H1 (cell line): ENCODE measurements at regions of chr22 and their contacts with region 1.

Region 1: DNA sequence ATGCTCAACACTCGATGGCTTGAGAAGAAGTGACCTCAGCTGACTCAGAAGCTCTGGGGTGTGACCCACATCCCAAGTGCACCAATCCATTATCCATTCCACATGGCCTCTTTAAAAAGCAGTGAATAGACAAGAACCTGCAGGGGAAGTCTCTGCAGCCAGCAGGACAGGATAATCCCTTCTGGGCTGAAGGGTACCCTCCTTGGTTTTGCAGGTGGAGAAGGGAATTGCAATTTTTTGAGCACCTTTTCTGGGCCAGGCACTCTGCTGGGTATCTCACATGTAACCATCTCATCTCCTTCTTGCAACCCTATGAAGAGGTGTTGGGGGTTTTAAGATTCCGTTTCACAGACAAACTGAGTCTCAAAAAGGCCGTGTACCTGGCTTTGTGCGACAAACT is 76.6 kb downstream of the MYO18B start:
- DNase-seq: no peak
- H3K4me3 ChIP-seq: no peak overlapping the region
- H3K27ac ChIP-seq: no peak overlapping the region
- H3K4me1 ChIP-seq: no peaks in the 10 kb centered on the region
- H3K27me3 ChIP-seq: no peaks in the 10 kb centered on the region
- CTCF ChIP-seq: peak in 2 of 3 experiments; percentile 1 to 15; a peak in 1 of 4 replicates
- EP300 ChIP-seq: no peak
- POLR2A ChIP-seq: no peak
- RAD21 ChIP-seq: no peak; a peak in 1 of 4 replicates

Region 2: GRCh38 chr22:25754527-25755202 is 63.9 kb before region 1 on chr22:
- CTCF ChIA-PET with region 1: no interaction called
- POLR2A ChIA-PET with region 1: no interaction called
- DNase-seq: no peak
- H3K4me3 ChIP-seq: no peak overlapping the region
- H3K27ac ChIP-seq: no peak overlapping the region
- H3K4me1 ChIP-seq: no peaks in the 10 kb centered on the region
- H3K27me3 ChIP-seq: no peaks in the 10 kb centered on the region
- CTCF ChIP-seq: no peak
- EP300 ChIP-seq: no peak
- POLR2A ChIP-seq: no peak
- RAD21 ChIP-seq: no peak

Region 3: GRCh38 chr22:25804676-25805075 is 13.9 kb before region 1 on chr22:
- CTCF ChIA-PET with region 1: interaction called, 11 read pairs
- POLR2A ChIA-PET with region 1: no interaction called
- DNase-seq: no peak
- H3K4me3 ChIP-seq: no peak overlapping the region
- H3K27ac ChIP-seq: no peak overlapping the region
- H3K4me1 ChIP-seq: no peaks in the 10 kb centered on the region
- H3K27me3 ChIP-seq: no peaks in the 10 kb centered on the region; a peak in 1 of 7 replicates
- CTCF ChIP-seq: no peak
- EP300 ChIP-seq: no peak
- POLR2A ChIP-seq: no peak
- RAD21 ChIP-seq: no peak